ENCODE measurements at regions of chr7 and their contacts with region 1.

Region 1: DNA sequence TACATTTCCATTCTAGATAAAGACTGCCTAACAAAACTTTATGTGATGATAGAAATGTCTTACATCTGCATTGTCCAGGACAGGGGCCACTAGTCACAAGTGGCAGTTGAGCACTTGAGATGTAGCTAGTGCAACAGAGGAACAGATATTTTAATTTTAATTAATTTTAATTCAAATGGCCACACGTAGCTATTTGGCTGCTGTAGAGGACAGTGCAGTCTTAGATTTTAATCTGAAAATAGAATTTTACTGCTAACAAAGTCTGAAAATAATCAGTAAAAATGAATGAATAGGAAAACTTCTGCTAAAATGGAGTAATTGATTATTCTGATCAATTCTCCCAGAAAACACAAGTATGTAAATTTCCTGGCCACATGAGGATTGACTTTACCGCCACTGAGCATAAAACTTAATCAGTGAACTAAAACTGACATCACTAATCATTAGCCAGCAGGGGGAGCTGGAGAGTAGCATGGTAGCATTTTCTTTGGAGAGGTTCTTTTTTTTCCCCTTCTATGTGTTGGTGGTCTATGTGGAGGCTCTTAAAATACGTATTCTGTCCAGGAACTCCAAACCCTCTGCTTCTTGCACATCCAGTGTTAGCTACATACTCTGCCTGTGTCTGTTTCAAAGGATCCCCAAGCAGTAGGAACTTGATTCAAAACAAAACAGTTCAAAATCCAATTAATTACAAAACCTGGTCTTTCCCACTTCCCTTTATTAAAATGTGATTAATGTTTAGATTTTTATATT is 52.1 kb downstream of the TSPAN12 start:
- DNase-seq: no peak
- ATAC-seq: peak; percentile 66

Region 2: DNA sequence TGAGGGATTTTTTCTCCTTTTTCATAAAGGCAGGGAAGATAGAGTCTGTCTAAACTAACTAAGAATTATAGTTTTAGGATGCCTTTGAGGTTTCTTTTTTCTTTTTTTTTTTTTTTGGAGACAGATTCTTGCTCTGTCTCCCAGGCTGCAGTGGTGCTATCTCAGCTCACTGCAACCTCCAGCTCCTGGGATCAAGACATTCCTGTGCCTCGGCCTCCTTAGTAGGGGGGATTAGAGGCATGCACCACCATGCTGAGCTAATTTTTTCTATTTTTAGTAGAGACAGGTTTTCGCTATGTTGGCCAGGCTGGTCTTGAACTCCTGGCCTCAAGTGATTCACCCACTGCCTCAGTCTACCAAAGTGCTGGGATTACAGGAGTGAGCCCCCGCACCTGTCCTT is 293.1 kb before region 1 on chr7:
- intact Hi-C with region 1: no loop called
- DNase-seq: no peak
- ATAC-seq: no peak

Region 3: DNA sequence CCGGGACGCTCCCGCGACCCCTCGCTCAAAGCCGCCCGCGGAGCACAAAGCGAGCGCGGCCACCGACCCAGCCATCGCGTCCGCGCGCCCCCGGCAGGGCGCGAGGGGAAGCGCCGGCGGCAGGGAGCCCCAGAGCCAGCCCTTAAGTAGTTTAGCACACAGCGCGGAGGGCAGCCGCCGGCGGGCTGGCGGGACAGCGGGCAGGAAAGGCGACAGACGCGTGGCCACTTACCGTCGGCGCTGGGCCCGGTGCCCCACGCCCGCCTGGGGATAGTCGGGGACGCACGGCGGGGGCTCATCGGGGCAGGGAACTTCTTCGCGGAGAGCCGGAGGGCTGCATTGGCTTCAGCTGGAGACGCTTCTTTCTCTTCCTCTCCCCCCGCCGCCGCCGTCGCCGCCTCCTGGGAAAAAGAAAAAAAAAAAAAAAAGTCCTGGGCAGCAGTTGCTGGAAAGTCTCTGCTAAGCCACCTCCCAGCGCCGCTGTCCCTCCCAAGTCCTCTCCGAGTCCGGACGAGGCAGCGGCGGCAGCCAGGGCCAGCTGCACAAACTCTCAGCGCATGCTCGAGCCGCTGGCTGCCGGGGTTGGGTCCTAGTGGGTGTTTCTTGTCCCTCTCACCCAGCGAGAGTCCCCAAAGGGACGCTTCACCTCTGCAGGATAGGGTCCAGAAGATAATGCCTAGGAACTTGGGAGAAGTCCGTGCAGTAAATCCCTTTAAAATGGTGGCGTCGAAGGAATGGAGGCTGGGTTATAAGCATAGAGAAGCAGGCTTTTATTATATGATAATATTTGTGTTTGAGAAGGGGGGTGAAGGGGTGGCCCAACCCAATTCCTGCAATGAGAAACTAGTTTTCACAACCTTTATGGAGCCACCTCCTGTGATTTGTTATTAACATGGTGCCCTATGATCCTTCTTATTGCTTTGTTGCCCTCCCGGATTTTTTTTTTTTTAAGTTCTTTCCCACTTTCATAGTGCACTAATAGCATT is 52.1 kb after region 1 on chr7 and contains the start of gene TSPAN12:
- intact Hi-C with region 1: loop called (anchors 10 kb)
- DNase-seq: peak; percentile 92
- ATAC-seq: peak; percentile 95
- total RNA-seq, gene TSPAN12: 69.0 TPM

Region 4: DNA sequence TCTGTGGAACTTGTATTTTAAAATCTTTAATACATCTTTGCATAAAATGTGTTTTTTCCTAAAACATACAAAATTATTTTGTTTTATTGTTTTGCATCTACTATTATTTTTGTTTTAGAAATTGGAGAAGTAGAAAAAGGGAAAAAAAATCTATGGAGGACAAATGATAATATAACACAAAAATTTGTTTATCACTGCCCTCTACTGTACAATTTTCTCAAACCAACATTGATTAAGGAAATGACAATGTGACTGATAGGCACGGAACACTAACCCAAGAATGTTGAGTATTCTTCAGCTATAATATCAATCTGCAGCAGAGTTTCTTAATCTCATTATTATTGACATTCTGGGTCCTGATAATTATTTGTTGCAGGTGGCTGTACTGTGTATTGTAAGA is 135.3 kb after region 1 on chr7:
- intact Hi-C with region 1: loop called (anchors 5 kb)
- DNase-seq: no peak
- ATAC-seq: no peak

Region 5: GRCh38 chr7:121328508-121329190 is 522.8 kb after region 1 on chr7 and contains the start of gene WNT16:
- intact Hi-C with region 1: no loop called
- DNase-seq: peak; percentile 39
- ATAC-seq: peak; percentile 38
- total RNA-seq, gene WNT16: not detected

Measured in left ventricle myocardium superior (tissue), 1 donor.